Upper lobe of right lung (tissue), 1 donor: ENCODE measurements at regions of chr6 and their contacts with region 1.

Region 1: DNA sequence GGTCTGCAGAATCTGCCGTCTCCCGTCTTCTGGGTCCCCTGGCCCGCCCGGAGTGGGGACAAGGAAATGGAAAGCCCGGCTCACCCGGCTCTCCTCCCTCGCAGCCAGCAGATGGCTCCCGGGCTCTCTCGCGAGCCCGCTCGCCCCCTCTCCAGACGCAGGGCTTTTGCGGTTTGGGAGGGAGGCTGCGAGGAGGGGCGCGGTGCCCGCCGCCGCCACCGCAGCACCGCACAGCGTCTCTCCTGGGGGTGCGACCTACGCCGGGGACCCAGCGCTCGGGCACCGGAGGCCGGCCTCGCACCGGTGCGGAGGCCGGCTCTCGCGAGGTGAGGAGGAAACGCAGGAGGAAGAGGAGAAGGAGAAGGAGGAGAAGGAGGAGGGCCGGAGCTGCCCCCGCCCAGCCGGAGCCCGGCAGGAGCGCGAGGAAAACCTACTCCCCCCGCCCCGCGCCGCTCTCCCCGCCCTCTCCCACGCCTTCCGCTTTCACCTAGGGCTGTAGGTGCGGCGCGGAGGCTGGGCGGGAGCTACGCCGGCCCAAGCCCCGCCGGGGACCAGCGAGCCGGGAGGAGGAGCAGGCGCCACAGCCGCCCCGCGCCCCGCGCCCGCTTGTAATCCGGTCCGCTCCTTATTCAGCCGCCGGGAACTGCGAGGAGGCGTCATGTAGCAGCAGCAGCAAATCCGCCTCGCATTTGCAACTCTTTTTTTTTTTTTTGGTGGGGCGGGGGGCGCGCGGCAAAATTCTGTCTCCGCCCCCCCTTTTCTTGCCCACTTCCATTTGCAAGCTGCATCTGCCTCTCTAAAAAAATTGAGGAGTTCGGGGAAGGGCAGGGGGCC is at the start of gene CARMIL1:
- DNase-seq: peak; percentile 95
- ATAC-seq: peak; percentile 96
- H3K4me3 ChIP-seq: peak within 1 kb of the TSS; percentile 79
- H3K27ac ChIP-seq: peak within 1 kb of the TSS; percentile 79
- H3K4me1 ChIP-seq: peaks cover 25% of the 10 kb centered on the region
- H3K27me3 ChIP-seq: no peaks in the 10 kb centered on the region
- CTCF ChIP-seq: peak; percentile 77
- total RNA-seq, gene CARMIL1: 37.6 TPM

Region 2: DNA sequence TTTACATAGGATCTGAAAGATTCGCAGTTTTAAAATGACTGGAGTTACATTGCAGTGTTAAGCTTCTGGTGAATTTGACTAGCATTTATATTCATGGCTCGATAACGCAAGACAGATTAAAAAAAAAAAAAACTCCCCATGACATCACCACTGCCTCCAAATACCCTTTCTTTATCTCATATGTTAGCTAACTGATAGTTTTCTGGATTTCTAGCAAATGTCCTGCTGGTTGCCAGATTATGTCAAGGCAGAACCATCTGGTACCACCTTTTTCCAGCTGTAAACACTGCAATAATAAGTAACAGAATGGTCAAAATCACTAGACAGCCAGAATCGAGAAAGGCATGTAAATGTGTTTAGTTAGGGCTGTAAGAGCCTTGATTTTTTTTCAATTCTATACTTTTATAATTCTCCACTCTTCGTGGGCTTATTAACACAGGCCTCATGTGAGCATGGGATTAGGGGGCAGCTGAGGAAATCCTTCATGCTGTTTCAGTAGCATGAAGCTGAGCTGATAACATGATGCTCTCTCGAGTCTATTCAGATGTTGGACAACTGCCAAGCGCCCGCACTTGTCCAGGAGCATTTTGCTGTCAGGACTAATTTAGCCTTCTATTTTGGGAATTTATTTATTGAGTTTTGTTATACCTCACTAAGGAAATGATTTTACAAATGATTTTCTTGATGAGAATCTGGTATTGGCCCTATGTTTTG is 206.8 kb after region 1 on chr6:
- intact Hi-C with region 1: loop called (anchors 5 kb)
- DNase-seq: no peak
- ATAC-seq: no peak
- H3K4me3 ChIP-seq: no peak overlapping the region
- H3K27ac ChIP-seq: no peak overlapping the region
- H3K4me1 ChIP-seq: peaks cover 7% of the 10 kb centered on the region
- H3K27me3 ChIP-seq: no peaks in the 10 kb centered on the region
- CTCF ChIP-seq: no peak